Posterior vena cava (tissue), 2 donors: ENCODE measurements at regions of chr3 and their contacts with region 1.

Region 1: DNA sequence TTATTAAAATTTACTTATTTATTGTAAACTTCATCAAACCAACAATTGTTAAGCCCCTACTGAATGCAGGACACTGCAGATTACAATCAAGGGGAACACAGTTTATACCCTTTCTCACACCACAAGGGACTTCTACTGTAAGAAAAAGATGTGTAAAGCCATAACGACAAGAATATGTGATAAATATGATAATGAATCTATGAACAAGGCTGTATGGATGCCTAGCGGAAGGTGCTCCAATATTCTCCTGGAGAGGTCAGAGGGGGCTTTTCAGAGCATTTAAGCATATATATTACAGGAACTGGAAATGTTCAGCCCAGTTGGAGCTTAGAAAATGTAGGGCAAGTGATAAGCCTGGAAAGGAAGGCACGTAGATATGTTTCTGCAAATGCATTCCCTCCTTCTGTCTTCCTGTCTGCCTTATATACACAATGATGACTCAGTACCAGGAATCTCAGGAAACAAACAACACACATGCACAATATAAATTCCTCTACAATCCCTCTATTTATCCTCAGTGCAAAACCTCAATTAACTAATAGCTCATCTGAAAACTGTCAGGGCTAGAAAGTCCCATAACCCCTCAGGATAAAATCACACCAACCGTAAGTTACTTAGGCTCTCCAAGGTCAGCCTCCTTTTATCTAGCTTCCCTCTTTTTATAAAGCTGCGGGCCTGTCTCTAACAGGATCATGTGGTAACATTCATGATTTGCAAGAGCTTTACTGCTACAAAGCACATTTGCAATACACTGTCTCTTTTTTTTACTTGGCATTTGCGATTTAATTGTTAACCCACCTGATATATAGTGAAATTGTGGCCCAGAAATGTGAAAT is 393.1 kb downstream of the LPP start:
- DNase-seq: no peak

Region 2: DNA sequence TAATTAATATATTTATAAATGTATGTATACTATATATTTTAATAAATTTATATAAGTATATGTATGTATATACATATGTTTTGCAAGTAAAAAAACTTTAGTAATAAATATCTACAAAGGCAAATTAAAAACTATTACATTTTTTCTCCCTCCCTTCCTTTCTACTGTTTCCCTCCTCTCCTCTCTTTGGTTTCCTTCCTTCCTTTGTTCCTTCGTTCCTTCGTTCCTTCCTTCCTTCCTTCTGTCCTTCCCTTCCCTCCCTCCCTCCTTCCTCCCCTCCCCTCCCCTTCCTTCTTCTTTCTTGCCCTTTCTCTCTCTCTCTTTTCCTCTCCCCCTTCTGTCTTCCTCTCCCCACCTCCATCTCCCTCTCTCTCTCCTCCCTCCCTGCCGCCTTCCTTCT is 30.5 kb after region 1 on chr3:
- intact Hi-C with region 1: loop called in 1 of 2 experiments (anchors 1 kb)
- DNase-seq: no peak